Activated B cell treated with CpG ODN at 0.5 μM for 24 hours (primary cell): ENCODE measurements at regions of chr2 and their contacts with region 1.

Region 1: DNA sequence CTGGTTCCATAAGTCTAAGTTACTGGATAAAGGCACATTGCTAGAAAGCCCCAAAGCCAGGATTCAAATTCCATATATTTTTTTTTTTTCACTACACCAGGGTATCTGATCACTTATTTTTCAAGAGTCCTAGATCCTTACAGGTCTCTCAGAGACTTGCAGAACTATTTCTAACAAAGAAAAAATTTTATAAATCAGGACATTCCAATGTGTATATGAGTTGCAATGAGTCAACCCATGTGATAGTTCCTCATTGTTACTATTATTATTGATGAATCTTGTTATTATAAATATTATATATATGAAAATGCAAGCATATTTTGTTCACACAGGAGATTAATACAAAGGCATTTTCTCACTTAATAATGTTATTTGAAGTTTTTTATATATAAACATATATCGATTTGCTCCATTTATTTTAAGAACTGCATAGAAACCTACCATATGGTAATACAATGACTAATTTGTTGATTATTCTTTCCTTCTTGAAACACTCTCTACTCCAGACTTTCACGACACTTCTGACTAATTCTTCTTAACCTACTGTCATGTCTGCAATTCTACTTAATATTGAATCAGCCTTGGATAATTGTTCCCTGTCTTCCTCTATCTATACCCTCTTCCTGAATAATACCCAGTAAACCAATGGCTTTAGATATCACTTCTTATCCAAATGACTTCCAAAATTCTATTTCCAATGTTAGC is 968.4 kb upstream of the NRXN1 start:
- DNase-seq: no peak
- ATAC-seq: no peak
- H3K4me3 Mint-ChIP-seq: no peak overlapping the region
- H3K27ac Mint-ChIP-seq: no peak overlapping the region
- H3K4me1 Mint-ChIP-seq: no peaks in the 10 kb centered on the region
- H3K27me3 Mint-ChIP-seq: no peaks in the 10 kb centered on the region
- CTCF ChIP-seq: no peak

Region 2: GRCh38 chr2:51846796-51847195 is 153.5 kb before region 1 on chr2:
- CTCF ChIA-PET with region 1: no interaction called
- POLR2A ChIA-PET with region 1: no interaction called
- intact Hi-C with region 1: no loop called
- DNase-seq: no peak
- ATAC-seq: no peak
- H3K4me3 Mint-ChIP-seq: no peak overlapping the region
- H3K27ac Mint-ChIP-seq: no peak overlapping the region
- H3K4me1 Mint-ChIP-seq: no peaks in the 10 kb centered on the region
- H3K27me3 Mint-ChIP-seq: no peaks in the 10 kb centered on the region
- CTCF ChIP-seq: no peak

Region 3: GRCh38 chr2:51981783-51982182 is 18.5 kb before region 1 on chr2:
- CTCF ChIA-PET with region 1: no interaction called
- POLR2A ChIA-PET with region 1: no interaction called
- intact Hi-C with region 1: loop called (anchors 2 kb)
- DNase-seq: no peak
- ATAC-seq: no peak
- H3K4me3 Mint-ChIP-seq: no peak overlapping the region
- H3K27ac Mint-ChIP-seq: no peak overlapping the region
- H3K4me1 Mint-ChIP-seq: no peaks in the 10 kb centered on the region
- H3K27me3 Mint-ChIP-seq: no peaks in the 10 kb centered on the region
- CTCF ChIP-seq: no peak

Region 4: DNA sequence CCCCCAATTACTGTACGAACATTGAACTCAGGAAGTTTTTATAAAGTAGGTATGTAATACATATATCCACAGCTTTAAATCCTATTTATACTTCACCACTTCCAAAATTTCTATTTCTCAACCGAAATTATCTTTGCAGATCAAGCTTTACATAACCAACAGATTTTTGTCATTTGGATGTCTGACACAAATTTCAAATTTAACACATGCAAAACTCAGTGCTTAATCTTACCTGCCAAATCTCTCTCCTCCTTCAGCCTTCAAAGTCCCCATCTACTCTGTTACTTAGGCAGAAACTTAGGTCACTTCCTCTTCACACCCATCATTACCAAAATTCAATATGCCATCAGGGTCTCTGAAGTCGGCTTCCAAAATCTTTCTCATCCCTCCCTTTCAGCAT is 21.7 kb after region 1 on chr2:
- CTCF ChIA-PET with region 1: no interaction called
- POLR2A ChIA-PET with region 1: no interaction called
- intact Hi-C with region 1: no loop called
- DNase-seq: no peak
- ATAC-seq: no peak
- H3K4me3 Mint-ChIP-seq: no peak overlapping the region
- H3K27ac Mint-ChIP-seq: no peak overlapping the region
- H3K4me1 Mint-ChIP-seq: no peaks in the 10 kb centered on the region
- H3K27me3 Mint-ChIP-seq: no peaks in the 10 kb centered on the region
- CTCF ChIP-seq: no peak

Region 5: DNA sequence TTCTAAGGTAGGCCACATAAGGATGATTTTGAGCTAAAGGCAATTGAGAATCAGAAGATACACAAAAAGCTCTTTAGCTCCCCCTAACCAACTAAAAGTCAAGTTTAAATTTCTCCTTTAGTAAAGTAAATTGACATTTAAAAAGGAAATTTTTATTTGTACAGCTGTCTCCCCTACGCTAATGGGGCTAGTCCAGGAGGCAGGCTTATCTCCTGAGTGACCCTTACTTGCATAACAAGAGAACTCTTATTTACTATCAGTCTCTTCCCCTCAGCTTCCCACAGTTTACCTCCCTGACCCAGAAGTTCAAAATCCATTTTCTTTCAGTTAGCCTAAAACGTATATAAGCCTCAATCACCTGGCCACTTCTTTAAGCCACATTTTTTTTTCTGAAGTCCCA is 34.4 kb after region 1 on chr2:
- CTCF ChIA-PET with region 1: no interaction called
- POLR2A ChIA-PET with region 1: no interaction called
- intact Hi-C with region 1: no loop called
- DNase-seq: no peak
- ATAC-seq: no peak
- H3K4me3 Mint-ChIP-seq: no peak overlapping the region
- H3K27ac Mint-ChIP-seq: no peak overlapping the region
- H3K4me1 Mint-ChIP-seq: no peaks in the 10 kb centered on the region
- H3K27me3 Mint-ChIP-seq: no peaks in the 10 kb centered on the region
- CTCF ChIP-seq: no peak